ENCODE measurements at regions of chr5 and their contacts with region 1.

Region 1: DNA sequence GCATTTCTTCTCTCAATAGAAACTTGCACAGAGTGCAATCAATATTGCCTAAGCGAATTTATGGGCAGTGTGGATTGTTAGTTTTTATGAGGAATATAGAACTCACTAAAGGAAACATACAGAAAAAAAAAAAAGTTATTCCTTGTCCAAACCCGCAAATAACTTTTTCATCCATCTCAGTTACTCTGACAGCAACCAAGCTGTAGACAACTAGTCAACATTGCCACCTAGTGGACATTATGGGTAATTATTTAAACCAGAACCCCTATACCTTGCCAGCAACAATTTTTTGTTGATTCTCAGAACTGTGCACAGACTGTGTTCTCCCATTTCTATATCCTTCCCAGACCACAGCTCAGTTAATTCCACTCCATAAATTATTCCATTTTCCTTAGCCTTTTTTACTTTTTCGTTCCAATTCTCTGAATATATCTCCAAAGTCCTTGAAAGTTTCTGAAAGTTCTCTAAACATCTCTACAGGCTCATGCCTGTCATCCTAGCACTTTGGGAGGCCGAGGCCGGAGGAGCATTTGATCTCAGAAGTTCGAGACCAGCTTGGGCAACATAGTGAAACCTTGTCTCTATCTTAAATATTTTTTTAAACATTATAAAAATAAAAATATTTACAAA is 2.6 kb upstream of the AFAP1L1 start:
- DNase-seq: no peak
- H3K4me3 ChIP-seq: no peak overlapping the region
- H3K27ac ChIP-seq: no peak overlapping the region
- H3K4me1 ChIP-seq: peaks cover 7 to 8% (median 7%) of the 10 kb centered on the region in 4 experiments; a peak in 5 of 7 replicates
- H3K27me3 ChIP-seq: peaks cover 8 to 36% (median 24%) of the 10 kb centered on the region in 4 experiments
- CTCF ChIP-seq: peak in 2 of 3 experiments; percentile 60 to 69; a peak in 3 of 4 replicates
- EP300 ChIP-seq: no peak
- POLR2A ChIP-seq: no peak
- RAD21 ChIP-seq: peak; percentile 77 to 80

Region 2: GRCh38 chr5:149121145-149121544 is 147.9 kb before region 1 on chr5:
- CTCF ChIA-PET with region 1: interaction called, 23 read pairs
- POLR2A ChIA-PET with region 1: no interaction called
- DNase-seq: no peak
- H3K4me3 ChIP-seq: no peak overlapping the region
- H3K27ac ChIP-seq: no peak overlapping the region
- H3K4me1 ChIP-seq: peaks cover 0 to 5% (median 0%) of the 10 kb centered on the region in 4 experiments; a peak in 2 of 7 replicates
- H3K27me3 ChIP-seq: no peaks in the 10 kb centered on the region
- CTCF ChIP-seq: no peak
- EP300 ChIP-seq: no peak
- POLR2A ChIP-seq: no peak
- RAD21 ChIP-seq: no peak

Region 3: DNA sequence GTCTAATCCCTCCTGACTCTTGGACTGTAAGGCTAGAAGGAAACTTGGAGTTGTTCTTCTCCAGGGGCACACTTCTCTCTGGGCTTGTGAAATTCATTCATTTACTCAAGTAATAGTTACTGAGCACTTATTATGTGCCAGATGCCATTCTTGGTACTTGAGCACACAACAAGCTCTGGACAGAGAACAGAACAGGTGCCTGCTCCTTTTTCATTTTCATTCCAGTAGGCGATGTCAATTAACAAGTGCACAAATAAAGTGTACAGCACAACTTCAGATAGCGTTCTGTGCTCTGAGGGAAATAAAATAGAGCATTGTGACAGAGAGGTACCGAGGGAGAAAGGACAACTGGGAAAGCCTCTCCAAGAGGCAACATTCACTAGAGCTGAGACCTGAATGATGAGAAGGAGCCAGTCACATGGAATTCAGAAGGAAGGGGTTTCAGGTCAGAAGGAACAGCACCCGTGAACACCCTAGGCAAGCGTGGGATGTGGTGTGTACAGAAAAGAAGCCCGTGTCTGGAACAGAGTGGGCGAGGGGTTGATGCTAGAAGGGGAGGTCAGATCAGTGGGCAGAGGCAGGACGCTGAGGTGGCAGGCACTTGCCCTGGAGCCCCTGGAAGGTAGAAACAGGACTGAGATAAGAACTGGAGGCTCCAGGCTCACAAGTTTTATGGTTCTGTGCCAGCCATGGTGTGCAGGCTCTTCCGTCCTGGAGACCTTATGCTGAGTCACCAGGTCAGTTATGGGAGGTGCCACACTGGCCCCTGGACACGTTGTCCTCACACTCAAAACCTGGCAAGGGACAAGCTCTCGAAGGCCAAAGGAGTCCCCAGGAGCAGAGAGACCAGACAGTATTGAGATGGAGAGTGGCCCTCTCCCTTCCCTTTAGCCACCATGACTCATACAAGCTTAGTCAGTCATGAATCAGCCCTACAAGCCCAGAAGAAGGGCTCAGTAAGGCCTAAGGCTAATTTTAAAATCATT is 135.0 kb before region 1 on chr5:
- CTCF ChIA-PET with region 1: interaction called, 82 read pairs
- POLR2A ChIA-PET with region 1: no interaction called
- DNase-seq: no peak
- H3K4me3 ChIP-seq: no peak overlapping the region
- H3K27ac ChIP-seq: no peak overlapping the region
- H3K4me1 ChIP-seq: peaks cover 0 to 4% (median 0%) of the 10 kb centered on the region in 4 experiments; a peak in 1 of 7 replicates
- H3K27me3 ChIP-seq: no peaks in the 10 kb centered on the region; a peak in 1 of 7 replicates
- CTCF ChIP-seq: no peak
- EP300 ChIP-seq: no peak
- POLR2A ChIP-seq: no peak
- RAD21 ChIP-seq: no peak

Region 4: GRCh38 chr5:149153751-149154610 is 115.1 kb before region 1 on chr5:
- CTCF ChIA-PET with region 1: interaction called, 10 read pairs
- POLR2A ChIA-PET with region 1: no interaction called
- DNase-seq: no peak
- H3K4me3 ChIP-seq: no peak overlapping the region
- H3K27ac ChIP-seq: no peak overlapping the region
- H3K4me1 ChIP-seq: no peaks in the 10 kb centered on the region
- H3K27me3 ChIP-seq: no peaks in the 10 kb centered on the region; a peak in 1 of 7 replicates
- CTCF ChIP-seq: no peak
- EP300 ChIP-seq: no peak
- POLR2A ChIP-seq: no peak
- RAD21 ChIP-seq: no peak

Region 5: DNA sequence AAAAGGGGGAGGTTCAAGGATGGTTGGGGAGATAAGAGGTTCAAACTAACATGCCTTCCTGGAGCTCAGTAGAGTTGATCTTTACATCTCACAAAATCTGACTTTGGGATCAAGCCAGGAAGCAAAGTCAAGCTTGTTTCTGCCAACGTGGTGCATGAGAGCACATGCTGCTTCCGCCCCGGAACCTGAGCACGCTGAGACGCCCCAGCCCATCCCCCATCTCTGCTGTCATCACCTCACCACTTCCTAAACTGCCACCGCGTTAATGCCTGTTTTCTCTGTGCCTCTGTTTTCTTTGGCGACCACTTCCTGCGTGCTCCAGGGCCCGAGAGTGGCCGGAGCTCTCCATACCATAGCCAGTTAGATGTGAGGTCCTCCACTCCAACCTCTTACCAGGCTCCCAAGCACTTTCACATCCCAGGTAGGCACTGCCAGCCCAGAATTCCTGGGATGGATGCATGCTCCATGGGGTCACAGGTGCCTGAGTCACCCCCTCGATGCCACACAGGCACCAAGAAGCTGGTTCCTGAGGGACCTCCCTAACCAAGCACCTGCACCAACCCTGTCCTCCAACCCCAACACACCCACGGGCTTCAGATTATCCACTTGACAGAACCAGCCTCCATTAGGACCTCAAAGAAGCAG is 28.6 kb before region 1 on chr5:
- CTCF ChIA-PET with region 1: interaction called, 88 read pairs
- POLR2A ChIA-PET with region 1: no interaction called
- DNase-seq: no peak
- H3K4me3 ChIP-seq: no peak overlapping the region
- H3K27ac ChIP-seq: no peak overlapping the region
- H3K4me1 ChIP-seq: no peaks in the 10 kb centered on the region
- H3K27me3 ChIP-seq: no peaks in the 10 kb centered on the region; a peak in 1 of 7 replicates
- CTCF ChIP-seq: no peak
- EP300 ChIP-seq: no peak
- POLR2A ChIP-seq: no peak
- RAD21 ChIP-seq: no peak

Region 6: GRCh38 chr5:149289301-149289700 is 20.3 kb after region 1 on chr5:
- CTCF ChIA-PET with region 1: interaction called, 12 read pairs
- POLR2A ChIA-PET with region 1: no interaction called
- DNase-seq: no peak
- H3K4me3 ChIP-seq: no peak overlapping the region
- H3K27ac ChIP-seq: no peak overlapping the region
- H3K4me1 ChIP-seq: no peaks in the 10 kb centered on the region
- H3K27me3 ChIP-seq: no peaks in the 10 kb centered on the region
- CTCF ChIP-seq: no peak
- EP300 ChIP-seq: no peak
- POLR2A ChIP-seq: no peak
- RAD21 ChIP-seq: no peak

Region 7: GRCh38 chr5:149517461-149518122 is 248.5 kb after region 1 on chr5:
- CTCF ChIA-PET with region 1: no interaction called
- POLR2A ChIA-PET with region 1: no interaction called
- DNase-seq: no peak
- H3K4me3 ChIP-seq: no peak overlapping the region
- H3K27ac ChIP-seq: no peak overlapping the region
- H3K4me1 ChIP-seq: peaks cover 0 to 15% (median 10%) of the 10 kb centered on the region in 4 experiments; a peak in 5 of 7 replicates
- H3K27me3 ChIP-seq: no peaks in the 10 kb centered on the region
- CTCF ChIP-seq: no peak
- EP300 ChIP-seq: no peak
- POLR2A ChIP-seq: no peak
- RAD21 ChIP-seq: no peak

Measured in H1 (cell line).